ENCODE measurements at regions of chr5 and their contacts with region 1.

Region 1: DNA sequence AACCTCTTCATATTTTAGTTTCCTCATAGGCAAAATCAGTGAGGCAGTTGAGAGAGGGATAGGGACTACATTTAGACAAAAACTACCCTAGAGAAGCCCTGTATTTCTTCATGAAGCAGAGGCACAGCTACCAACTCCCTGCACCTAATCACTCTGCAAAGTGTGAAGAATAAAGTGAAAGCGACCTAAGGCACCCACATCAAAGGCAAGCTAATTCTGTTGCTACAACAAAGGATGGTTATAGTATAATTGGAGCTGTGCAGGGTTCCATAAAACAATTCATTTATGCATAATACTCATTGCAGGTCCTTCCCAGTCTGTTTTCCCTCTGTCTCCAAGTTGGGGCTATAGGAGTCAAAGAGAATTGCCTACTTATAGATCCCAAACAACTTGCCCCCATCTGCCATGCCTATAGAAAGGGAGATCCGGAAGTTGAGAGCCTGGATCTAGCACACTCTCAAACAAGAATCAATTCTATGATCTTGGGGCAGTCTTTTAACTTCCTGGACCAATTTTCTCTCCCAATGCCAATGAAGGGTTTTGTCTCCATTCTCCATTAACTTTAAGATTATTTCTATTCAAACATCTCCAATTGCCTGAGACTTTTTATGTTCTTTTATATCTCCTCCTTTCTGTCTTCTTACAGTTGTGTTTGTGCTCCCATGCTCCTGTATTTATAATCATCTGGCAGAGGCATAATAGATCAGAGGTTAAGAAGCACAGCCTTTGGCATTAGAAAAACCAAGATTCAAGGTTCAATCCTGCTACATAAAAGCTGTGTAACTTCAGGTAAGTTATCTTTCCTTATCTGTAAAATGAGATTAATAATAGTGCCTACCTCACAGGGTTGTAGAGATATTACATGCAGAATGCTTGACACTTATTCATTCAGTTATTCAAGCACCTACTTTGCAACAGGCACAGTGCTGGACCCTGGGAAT is 56.0 kb upstream of the PTGER4 start:
- DNase-seq: peak in 9 of 14 experiments; percentile 3 to 74 (median 29)
- ATAC-seq: peak; percentile 88
- H3K4me3 ChIP-seq: no peak overlapping the region
- H3K4me3 Mint-ChIP-seq: peak overlapping the region; percentile 22
- H3K27ac ChIP-seq: peak overlapping the region in 1 of 2 donors; percentile 17
- H3K27ac Mint-ChIP-seq: peak overlapping the region; percentile 74
- H3K4me1 ChIP-seq: peaks cover 17% of the 10 kb centered on the region
- H3K4me1 Mint-ChIP-seq: peaks cover 54% of the 10 kb centered on the region
- H3K27me3 ChIP-seq: no peaks in the 10 kb centered on the region
- H3K27me3 Mint-ChIP-seq: no peaks in the 10 kb centered on the region
- CTCF ChIP-seq: no peak

Region 2: GRCh38 chr5:40605295-40605958 is 18.3 kb before region 1 on chr5:
- CTCF ChIA-PET with region 1: interaction called, 3 read pairs
- POLR2A ChIA-PET with region 1: interaction called, 10 read pairs
- intact Hi-C with region 1: no loop called
- DNase-seq: peak in 4 of 14 experiments; percentile 17 to 79 (median 26)
- ATAC-seq: peak; percentile 59
- H3K4me3 ChIP-seq: peak overlapping the region; percentile 18
- H3K4me3 Mint-ChIP-seq: peak overlapping the region; percentile 70
- H3K27ac ChIP-seq: peak overlapping the region in 1 of 2 donors; percentile 53
- H3K27ac Mint-ChIP-seq: peak overlapping the region; percentile 38
- H3K4me1 ChIP-seq: peaks cover 21% of the 10 kb centered on the region
- H3K4me1 Mint-ChIP-seq: peaks cover 47% of the 10 kb centered on the region
- H3K27me3 ChIP-seq: no peaks in the 10 kb centered on the region
- H3K27me3 Mint-ChIP-seq: no peaks in the 10 kb centered on the region
- CTCF ChIP-seq: no peak

Region 3: DNA sequence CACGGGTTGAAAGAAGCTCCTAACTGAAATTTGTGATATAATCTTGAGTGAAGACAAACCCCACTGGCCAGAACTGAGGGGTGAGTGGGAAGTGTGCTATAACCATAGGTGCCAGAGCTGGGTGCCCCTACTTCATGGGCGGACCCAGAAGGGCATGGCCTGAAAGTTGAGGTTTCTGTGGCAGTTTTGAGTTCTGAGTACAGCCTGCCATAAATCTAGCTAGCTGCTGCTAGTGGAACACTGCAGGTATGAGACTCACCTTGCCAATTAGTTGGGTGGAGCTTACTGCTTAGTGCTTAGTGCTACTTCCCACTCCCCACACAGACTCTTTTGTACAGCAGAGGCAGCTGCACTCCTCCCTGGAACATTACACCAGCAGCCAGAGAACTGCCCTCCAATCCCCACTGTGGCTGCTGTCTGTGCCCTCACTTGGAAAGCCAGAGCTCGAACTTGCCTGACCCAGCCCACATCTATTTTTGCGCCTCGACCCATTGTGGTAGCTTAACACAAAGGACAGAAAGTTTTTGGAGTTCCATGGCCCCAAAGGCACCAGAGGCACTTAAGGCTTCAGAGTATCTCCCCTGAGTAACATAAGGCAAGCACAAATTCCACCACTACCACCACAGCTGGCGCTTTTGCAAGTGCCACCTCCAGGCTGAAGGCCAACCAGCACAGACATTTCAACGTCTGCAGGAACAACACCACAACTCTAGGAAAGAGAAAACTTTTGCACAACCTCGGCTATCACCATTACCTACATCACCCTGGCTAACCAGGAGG is 28.9 kb after region 1 on chr5:
- CTCF ChIA-PET with region 1: no interaction called
- POLR2A ChIA-PET with region 1: interaction called, 5 read pairs
- intact Hi-C with region 1: loop called in 1 of 2 experiments (anchors 2 kb)
- DNase-seq: peak in 4 of 14 experiments; percentile 8 to 60 (median 42)
- ATAC-seq: peak; percentile 27
- H3K4me3 ChIP-seq: no peak overlapping the region
- H3K4me3 Mint-ChIP-seq: peak overlapping the region; percentile 84
- H3K27ac ChIP-seq: peak overlapping the region; percentile 33 to 50
- H3K27ac Mint-ChIP-seq: peak overlapping the region; percentile 82
- H3K4me1 ChIP-seq: peaks cover 37% of the 10 kb centered on the region
- H3K4me1 Mint-ChIP-seq: peaks cover 83% of the 10 kb centered on the region
- H3K27me3 ChIP-seq: no peaks in the 10 kb centered on the region
- H3K27me3 Mint-ChIP-seq: no peaks in the 10 kb centered on the region
- CTCF ChIP-seq: no peak

Region 4: DNA sequence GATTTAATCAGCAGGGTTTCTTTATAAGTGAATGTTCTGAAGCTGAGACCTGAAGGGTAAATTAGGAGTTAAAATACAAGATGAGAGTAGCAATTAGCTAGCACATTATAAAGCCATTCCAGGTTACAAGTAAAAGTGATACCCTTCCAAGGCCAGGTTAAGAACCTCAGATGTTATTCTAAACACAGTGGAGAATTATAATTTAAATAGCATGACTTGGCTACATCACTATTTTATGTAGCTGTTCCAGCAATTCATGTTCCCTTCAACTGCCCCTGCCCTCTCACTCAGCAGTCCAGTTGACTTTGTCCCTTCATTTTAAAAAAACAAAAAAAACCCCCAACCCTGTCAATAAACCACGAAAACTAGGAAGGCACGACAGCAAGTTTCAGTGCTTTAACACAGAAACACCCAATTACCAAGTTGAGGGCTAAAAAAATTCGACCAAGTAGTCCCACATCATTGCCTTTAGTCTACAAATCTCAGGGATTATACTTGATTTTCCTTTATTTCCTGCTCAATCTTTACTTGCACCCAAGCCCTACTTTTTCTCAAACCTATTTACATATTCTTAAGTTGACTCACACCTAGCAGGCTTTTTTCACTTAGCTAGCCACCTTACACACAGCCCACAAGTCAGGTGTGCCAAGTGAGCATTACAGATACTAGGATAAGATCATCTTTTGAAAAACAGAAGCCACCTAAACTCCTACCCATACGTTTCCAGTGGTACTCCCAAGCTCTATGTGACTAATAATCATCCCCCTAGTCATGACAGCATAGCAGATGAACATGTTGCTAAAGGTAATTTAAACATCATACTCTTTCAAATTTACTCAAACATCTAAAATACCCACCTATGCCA is 207.8 kb after region 1 on chr5:
- CTCF ChIA-PET with region 1: no interaction called
- POLR2A ChIA-PET with region 1: no interaction called
- intact Hi-C with region 1: no loop called
- DNase-seq: peak in 1 of 14 experiments; percentile 14
- ATAC-seq: no peak
- H3K4me3 ChIP-seq: no peak overlapping the region
- H3K4me3 Mint-ChIP-seq: peak overlapping the region; percentile 5
- H3K27ac ChIP-seq: no peak overlapping the region
- H3K27ac Mint-ChIP-seq: peak overlapping the region; percentile 97
- H3K4me1 ChIP-seq: peaks cover 29% of the 10 kb centered on the region
- H3K4me1 Mint-ChIP-seq: peaks cover 65% of the 10 kb centered on the region
- H3K27me3 ChIP-seq: no peaks in the 10 kb centered on the region
- H3K27me3 Mint-ChIP-seq: no peaks in the 10 kb centered on the region
- CTCF ChIP-seq: no peak